Naive thymus-derived CD4-positive, alpha-beta T cell (primary cell): ENCODE measurements at regions of chr2 and their contacts with region 1.

Region 1: GRCh38 chr2:219160186-219161017 is at the start of gene NHEJ1:
- DNase-seq: peak; percentile 84 to 98 (median 92)
- ATAC-seq: peak; percentile 96
- H3K4me3 ChIP-seq: peak within 1 kb of the TSS; percentile 70
- H3K4me3 Mint-ChIP-seq: peak within 1 kb of the TSS; percentile 88 to 97 (median 93)
- H3K27ac ChIP-seq: peak within 1 kb of the TSS; percentile 77
- H3K27ac Mint-ChIP-seq: peak within 1 kb of the TSS; percentile 81 to 97 (median 93)
- H3K4me1 ChIP-seq: peaks cover 11 to 12% of the 10 kb centered on the region in 2 donors
- H3K4me1 Mint-ChIP-seq: peaks cover 13 to 41% (median 24%) of the 10 kb centered on the region in 7 donors
- H3K27me3 ChIP-seq: no peaks in the 10 kb centered on the region
- H3K27me3 Mint-ChIP-seq: no peaks in the 10 kb centered on the region
- total RNA-seq, gene NHEJ1: 11.4 to 24.0 (median 17.9) TPM

Region 2: GRCh38 chr2:219057709-219058540 is 102.5 kb before region 1 on chr2:
- CTCF ChIA-PET with region 1: interaction called, 43 read pairs
- POLR2A ChIA-PET with region 1: interaction called, 3 read pairs
- intact Hi-C with region 1: loop called (anchors 1 kb)
- DNase-seq: peak; percentile 45 to 82 (median 68)
- ATAC-seq: peak; percentile 94
- H3K4me3 ChIP-seq: peak overlapping the region; percentile 27
- H3K4me3 Mint-ChIP-seq: peak overlapping the region; percentile 40 to 82 (median 57)
- H3K27ac ChIP-seq: no peak overlapping the region
- H3K27ac Mint-ChIP-seq: no peak overlapping the region
- H3K4me1 ChIP-seq: peaks cover 3 to 27% of the 10 kb centered on the region in 2 donors
- H3K4me1 Mint-ChIP-seq: peaks cover 8 to 22% (median 16%) of the 10 kb centered on the region in 7 donors
- H3K27me3 ChIP-seq: peaks cover 15 to 16% of the 10 kb centered on the region in 2 donors
- H3K27me3 Mint-ChIP-seq: peaks cover 50 to 75% (median 53%) of the 10 kb centered on the region in 5 donors

Region 3: GRCh38 chr2:219218732-219219701 is 58.6 kb after region 1 on chr2 and contains the start of gene ABCB6:
- CTCF ChIA-PET with region 1: interaction called, 54 read pairs
- POLR2A ChIA-PET with region 1: interaction called, 6 read pairs
- intact Hi-C with region 1: loop called (anchors 1 to 2 kb)
- DNase-seq: peak; percentile 72 to 90 (median 85)
- ATAC-seq: peak; percentile 92
- H3K4me3 ChIP-seq: peak within 1 kb of the TSS; percentile 60
- H3K4me3 Mint-ChIP-seq: peak within 1 kb of the TSS; percentile 78 to 89 (median 82)
- H3K27ac ChIP-seq: peak within 1 kb of the TSS; percentile 65
- H3K27ac Mint-ChIP-seq: peak within 1 kb of the TSS; percentile 61 to 86 (median 79)
- H3K4me1 ChIP-seq: peaks cover 13 to 14% of the 10 kb centered on the region in 2 donors
- H3K4me1 Mint-ChIP-seq: peaks cover 0 to 29% (median 24%) of the 10 kb centered on the region in 7 donors
- H3K27me3 ChIP-seq: no peaks in the 10 kb centered on the region
- H3K27me3 Mint-ChIP-seq: no peaks in the 10 kb centered on the region
- total RNA-seq, gene ABCB6: 4.1 to 30.2 (median 8.3) TPM

Region 4: DNA sequence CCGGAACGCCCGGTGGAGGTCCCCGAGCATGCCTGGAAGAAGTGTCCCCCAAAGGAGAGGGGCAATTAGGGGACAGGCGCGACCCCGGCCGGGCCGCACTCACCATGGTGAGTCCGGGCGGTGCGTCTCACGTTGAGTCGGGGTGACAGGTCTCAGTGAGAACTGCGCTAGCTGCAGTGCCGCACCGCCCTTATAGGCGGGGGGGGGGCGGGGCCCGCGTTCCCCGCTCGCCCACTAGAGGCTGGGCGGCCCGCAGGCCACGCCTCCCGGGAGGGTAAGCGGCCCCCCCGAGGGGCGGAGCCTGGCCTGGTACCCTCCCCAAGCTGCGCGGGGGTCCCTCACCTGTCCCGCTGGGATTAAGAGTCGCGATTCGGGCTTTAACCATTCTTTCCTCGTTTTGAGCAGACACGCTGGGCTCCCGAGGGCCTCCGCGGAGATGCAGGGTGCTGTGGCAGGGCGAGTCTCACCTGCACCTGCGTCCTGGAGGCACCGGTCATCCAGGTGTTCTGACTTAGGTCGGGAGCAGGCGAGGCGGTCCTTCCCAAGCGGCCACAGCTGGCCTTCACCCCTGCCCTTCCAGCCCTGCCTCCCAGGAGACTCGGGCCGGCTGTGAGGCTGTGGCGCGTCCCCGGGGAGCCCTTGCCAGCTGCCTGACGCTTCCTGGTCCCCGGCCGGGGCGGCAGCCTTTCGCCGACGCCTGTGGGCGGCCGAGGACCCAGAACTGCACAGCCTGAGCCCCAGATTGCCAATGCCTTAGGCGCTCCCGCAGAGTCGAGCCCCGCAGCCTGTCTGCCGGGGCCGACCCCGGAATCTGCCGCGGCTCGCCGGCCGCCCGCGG is 93.6 kb after region 1 on chr2 and contains the start of gene TUBA4A:
- CTCF ChIA-PET with region 1: interaction called, 5 read pairs
- POLR2A ChIA-PET with region 1: interaction called, 11 read pairs
- intact Hi-C with region 1: loop called (anchors 1 kb)
- DNase-seq: peak; percentile 84 to 94 (median 91)
- ATAC-seq: peak; percentile 92
- H3K4me3 ChIP-seq: peak within 1 kb of the TSS; percentile 79
- H3K4me3 Mint-ChIP-seq: peak within 1 kb of the TSS; percentile 82 to 100 (median 92)
- H3K27ac ChIP-seq: peak within 1 kb of the TSS; percentile 95
- H3K27ac Mint-ChIP-seq: peak within 1 kb of the TSS; percentile 88 to 99 (median 96)
- H3K4me1 ChIP-seq: peaks cover 31 to 38% of the 10 kb centered on the region in 2 donors
- H3K4me1 Mint-ChIP-seq: peaks cover 28 to 54% (median 47%) of the 10 kb centered on the region in 7 donors
- H3K27me3 ChIP-seq: no peaks in the 10 kb centered on the region
- H3K27me3 Mint-ChIP-seq: peaks cover 0 to 3% (median 0%) of the 10 kb centered on the region in 5 donors
- total RNA-seq, gene TUBA4A: 82.9 to 260 (median 183) TPM

Region 5: GRCh38 chr2:219530048-219530963 is 369.9 kb after region 1 on chr2:
- CTCF ChIA-PET with region 1: no interaction called
- POLR2A ChIA-PET with region 1: no interaction called
- intact Hi-C with region 1: loop called in 1 of 2 experiments (anchors 1 kb)
- DNase-seq: peak; percentile 70 to 89 (median 83)
- ATAC-seq: peak; percentile 91
- H3K4me3 ChIP-seq: no peak overlapping the region
- H3K4me3 Mint-ChIP-seq: no peak overlapping the region
- H3K27ac ChIP-seq: no peak overlapping the region
- H3K27ac Mint-ChIP-seq: no peak overlapping the region
- H3K4me1 ChIP-seq: peaks cover 0 to 8% of the 10 kb centered on the region in 2 donors
- H3K4me1 Mint-ChIP-seq: peaks cover 0 to 7% (median 0%) of the 10 kb centered on the region in 7 donors
- H3K27me3 ChIP-seq: peaks cover 3 to 20% of the 10 kb centered on the region in 2 donors
- H3K27me3 Mint-ChIP-seq: peaks cover 53 to 65% (median 57%) of the 10 kb centered on the region in 5 donors